ENCODE measurements at regions of chr18 and their contacts with region 1.

Region 1: GRCh38 chr18:72114801-72115594 is 429.1 kb downstream of the CBLN2 start:
- DNase-seq: no peak
- ATAC-seq: no peak
- H3K4me3 ChIP-seq: no peak overlapping the region
- H3K4me3 Mint-ChIP-seq: no peak overlapping the region
- H3K27ac ChIP-seq: no peak overlapping the region
- H3K27ac Mint-ChIP-seq: no peak overlapping the region
- H3K4me1 ChIP-seq: no peaks in the 10 kb centered on the region
- H3K4me1 Mint-ChIP-seq: no peaks in the 10 kb centered on the region
- H3K27me3 ChIP-seq: no peaks in the 10 kb centered on the region
- H3K27me3 Mint-ChIP-seq: no peaks in the 10 kb centered on the region
- CTCF ChIP-seq: no peak

Region 2: GRCh38 chr18:72056171-72056570 is 58.8 kb before region 1 on chr18:
- CTCF ChIA-PET with region 1: no interaction called
- POLR2A ChIA-PET with region 1: no interaction called
- intact Hi-C with region 1: loop called in 1 of 2 experiments (anchors 10 kb)
- DNase-seq: no peak
- ATAC-seq: no peak
- H3K4me3 ChIP-seq: no peak overlapping the region
- H3K4me3 Mint-ChIP-seq: no peak overlapping the region
- H3K27ac ChIP-seq: no peak overlapping the region
- H3K27ac Mint-ChIP-seq: no peak overlapping the region
- H3K4me1 ChIP-seq: no peaks in the 10 kb centered on the region
- H3K4me1 Mint-ChIP-seq: no peaks in the 10 kb centered on the region
- H3K27me3 ChIP-seq: no peaks in the 10 kb centered on the region
- H3K27me3 Mint-ChIP-seq: no peaks in the 10 kb centered on the region
- CTCF ChIP-seq: no peak

Measured in CD8-positive, alpha-beta T cell (primary cell).